A673 (cell line): ENCODE measurements at regions of chr11 and their contacts with region 1.

Region 1: GRCh38 chr11:132158093-132158492 is 787.7 kb downstream of the NTM start:
- DNase-seq: peak; percentile 39
- H3K4me3 ChIP-seq: no peak overlapping the region
- H3K27ac ChIP-seq: no peak overlapping the region
- H3K4me1 ChIP-seq: peaks cover 8% of the 10 kb centered on the region
- H3K27me3 ChIP-seq: no peaks in the 10 kb centered on the region
- CTCF ChIP-seq: peak; percentile 66

Region 2: GRCh38 chr11:132140056-132140455 is 18.0 kb before region 1 on chr11:
- CTCF ChIA-PET with region 1: no interaction called
- POLR2A ChIA-PET with region 1: no interaction called
- intact Hi-C with region 1: loop called (anchors 1 kb)
- DNase-seq: peak; percentile 30
- H3K4me3 ChIP-seq: no peak overlapping the region
- H3K27ac ChIP-seq: no peak overlapping the region
- H3K4me1 ChIP-seq: no peaks in the 10 kb centered on the region
- H3K27me3 ChIP-seq: no peaks in the 10 kb centered on the region
- CTCF ChIP-seq: peak; percentile 50